Activated T-helper 2 cell treated with anti-CD3 and anti-CD28 coated beads, Interferon-gamma antibody, Interleukin-2, Interleukin-4, amounts not matched to agents 10 μg/mL and 5 μg/mL and 100 μg/mL, durations not matched to agents 14 hours and 24 hours and 36 hours (primary cell): ENCODE measurements at regions of chr1 and their contacts with region 1.

Region 1: GRCh38 chr1:225896937-225897549 is 8.1 kb upstream of the LEFTY1 start:
- DNase-seq: peak; percentile 75
- H3K4me3 Mint-ChIP-seq: peak overlapping the region; percentile 52
- H3K27ac Mint-ChIP-seq: peak overlapping the region; percentile 56
- H3K4me1 Mint-ChIP-seq: peaks cover 31% of the 10 kb centered on the region
- H3K27me3 Mint-ChIP-seq: peaks cover 13% of the 10 kb centered on the region

Region 2: GRCh38 chr1:225777583-225778336 is 119.3 kb before region 1 on chr1 and contains the start of gene SRP9:
- intact Hi-C with region 1: loop called (anchors 1 kb)
- DNase-seq: peak; percentile 99
- H3K4me3 Mint-ChIP-seq: no peak within 1 kb of the TSS
- H3K27ac Mint-ChIP-seq: no peak within 1 kb of the TSS
- H3K4me1 Mint-ChIP-seq: peaks cover 15% of the 10 kb centered on the region
- H3K27me3 Mint-ChIP-seq: no peaks in the 10 kb centered on the region
- total RNA-seq, gene SRP9: 255 and 270 TPM in 2 replicates

Region 3: GRCh38 chr1:225809842-225810578 is 87.0 kb before region 1 on chr1 and contains the start of gene EPHX1:
- intact Hi-C with region 1: loop called (anchors 5 kb)
- DNase-seq: peak; percentile 66
- H3K4me3 Mint-ChIP-seq: peak within 1 kb of the TSS; percentile 80
- H3K27ac Mint-ChIP-seq: no peak within 1 kb of the TSS
- H3K4me1 Mint-ChIP-seq: peaks cover 4% of the 10 kb centered on the region
- H3K27me3 Mint-ChIP-seq: peaks cover 11% of the 10 kb centered on the region
- total RNA-seq, gene EPHX1: 2.2 and 2.9 TPM in 2 replicates

Region 4: DNA sequence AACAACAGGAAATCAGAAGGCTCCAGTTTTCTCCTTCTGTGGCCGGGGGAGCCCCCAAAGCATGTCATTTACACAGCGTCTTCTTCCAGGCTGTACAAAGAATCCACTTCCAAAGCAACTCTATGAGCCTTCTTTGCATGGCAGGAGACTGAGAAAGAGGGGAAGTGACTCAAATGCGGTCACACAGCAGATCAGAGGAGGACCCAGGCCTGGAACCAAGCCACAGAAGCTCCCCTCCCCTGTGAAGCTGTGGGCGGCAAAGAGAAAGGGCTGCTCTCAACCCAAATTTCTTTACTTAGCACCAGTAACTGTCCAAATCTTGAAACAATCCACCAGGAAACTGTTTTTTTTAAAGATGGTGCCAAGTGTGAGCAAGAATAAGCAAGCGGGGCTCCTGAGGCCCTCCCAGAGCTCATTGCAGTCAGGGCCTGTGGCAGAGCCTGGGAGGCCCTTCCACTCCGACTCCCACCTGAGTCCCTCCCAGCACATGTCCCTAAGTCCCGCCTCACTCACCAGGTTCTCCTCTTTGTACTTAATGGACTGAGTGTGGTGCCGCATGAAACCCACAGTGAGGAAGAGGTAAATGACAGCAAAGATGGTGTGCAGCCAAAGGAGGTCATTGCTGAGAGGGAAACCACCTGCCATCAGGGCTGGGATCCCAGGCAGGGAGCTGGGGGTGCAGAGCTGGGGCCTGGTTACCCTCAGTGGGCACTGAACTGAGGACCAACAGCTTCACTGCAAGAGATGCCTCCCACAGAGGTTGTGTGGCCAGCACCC is 30.8 kb before region 1 on chr1:
- intact Hi-C with region 1: loop called (anchors 1 kb)
- DNase-seq: peak; percentile 58
- H3K4me3 Mint-ChIP-seq: peak overlapping the region; percentile 55
- H3K27ac Mint-ChIP-seq: no peak overlapping the region
- H3K4me1 Mint-ChIP-seq: peaks cover 26% of the 10 kb centered on the region
- H3K27me3 Mint-ChIP-seq: no peaks in the 10 kb centered on the region

Region 5: DNA sequence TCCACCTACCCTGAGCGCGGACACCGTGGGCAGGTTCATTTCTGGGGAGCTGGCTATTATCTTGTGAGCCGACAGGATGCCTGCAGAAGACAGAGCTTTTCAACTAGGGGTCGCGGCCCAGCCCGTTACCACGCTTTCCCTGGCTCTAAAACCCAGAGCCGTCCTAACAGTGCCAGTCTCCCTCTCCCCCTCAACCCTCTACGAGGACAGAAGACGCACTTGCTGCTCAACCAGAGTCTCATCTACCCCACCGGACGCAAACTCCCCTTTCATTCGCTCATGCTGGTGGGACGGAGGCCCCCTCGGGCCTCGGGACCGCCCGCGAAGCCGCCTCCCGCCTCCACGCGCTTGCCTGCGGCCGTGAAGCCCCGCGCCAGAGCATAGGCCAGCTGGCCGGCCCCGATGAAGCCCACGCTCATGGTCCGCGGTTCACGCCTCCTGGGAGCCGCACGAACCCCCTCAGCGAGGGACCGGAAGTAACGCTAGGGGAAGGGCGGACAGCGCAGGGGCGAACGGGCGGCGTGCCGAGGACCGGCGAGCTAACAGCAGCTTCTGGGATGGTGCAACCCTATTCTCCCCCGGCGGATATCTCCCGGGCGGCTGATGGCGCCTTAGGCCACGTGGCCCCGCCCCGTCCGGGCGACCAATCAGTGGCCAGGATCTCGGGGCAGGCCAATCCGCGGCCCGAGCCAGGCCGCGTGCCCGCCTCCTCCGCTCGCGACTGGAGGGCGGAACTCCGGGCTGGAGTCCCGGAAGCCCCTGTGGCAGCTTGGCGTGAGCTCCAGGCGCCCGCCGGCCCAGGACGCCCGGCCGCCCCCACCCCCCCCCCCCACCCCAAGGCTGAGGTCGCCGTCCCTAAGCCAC is 26.9 kb after region 1 on chr1 and contains the start of gene PYCR2:
- intact Hi-C with region 1: loop called (anchors 1 kb)
- DNase-seq: peak; percentile 94
- H3K4me3 Mint-ChIP-seq: peak within 1 kb of the TSS; percentile 92
- H3K27ac Mint-ChIP-seq: peak within 1 kb of the TSS; percentile 91
- H3K4me1 Mint-ChIP-seq: peaks cover 43% of the 10 kb centered on the region
- H3K27me3 Mint-ChIP-seq: no peaks in the 10 kb centered on the region
- total RNA-seq, gene PYCR2: 117 and 121 TPM in 2 replicates

Region 6: GRCh38 chr1:225934711-225935110 is 37.7 kb after region 1 on chr1:
- intact Hi-C with region 1: no loop called
- DNase-seq: no peak
- H3K4me3 Mint-ChIP-seq: no peak overlapping the region
- H3K27ac Mint-ChIP-seq: no peak overlapping the region
- H3K4me1 Mint-ChIP-seq: no peaks in the 10 kb centered on the region
- H3K27me3 Mint-ChIP-seq: no peaks in the 10 kb centered on the region